A549 (cell line): ENCODE measurements at regions of chr7 and their contacts with region 1.

Region 1: GRCh38 chr7:103074519-103075336 is at the starts of genes ARMC10 and FBXL13:
- DNase-seq: peak; percentile 91 to 92
- ATAC-seq: peak; percentile 89 to 93
- H3K4me3 ChIP-seq: peak within 1 kb of the TSS; percentile 93
- H3K27ac ChIP-seq: peak within 1 kb of the TSS; percentile 88 to 94
- H3K4me1 ChIP-seq: peaks cover 15% of the 10 kb centered on the region
- CTCF ChIP-seq: 0 out of 3 replicates have a peak, but pooled peaks have one; percentile 7
- EP300 ChIP-seq: peak in 1 of 2 experiments; percentile 20; a peak in 1 of 5 replicates
- POLR2A ChIP-seq: peak; percentile 87
- RAD21 ChIP-seq: no peak
- polyA plus RNA-seq, gene ARMC10: 61.9 and 63.2 TPM in 2 replicates
- polyA plus RNA-seq, gene FBXL13: 0.70 and 0.78 TPM in 2 replicates

Region 2: GRCh38 chr7:102433219-102434038 is 641.3 kb before region 1 on chr7 and contains the start of gene ORAI2:
- CTCF ChIA-PET with region 1: no interaction called
- POLR2A ChIA-PET with region 1: no interaction called
- DNase-seq: peak; percentile 51 to 81
- ATAC-seq: peak; percentile 63 to 74
- H3K4me3 ChIP-seq: peak within 1 kb of the TSS; percentile 89
- H3K27ac ChIP-seq: peak within 1 kb of the TSS; percentile 85 to 98
- H3K4me1 ChIP-seq: peaks cover 30% of the 10 kb centered on the region
- CTCF ChIP-seq: no peak
- EP300 ChIP-seq: no peak
- POLR2A ChIP-seq: peak; percentile 56
- RAD21 ChIP-seq: no peak
- polyA plus RNA-seq, gene ORAI2: 12.8 and 14.6 TPM in 2 replicates

Region 3: GRCh38 chr7:103059471-103059870 is 15.3 kb before region 1 on chr7:
- CTCF ChIA-PET with region 1: interaction called, 61 read pairs
- POLR2A ChIA-PET with region 1: interaction called, 19 read pairs
- DNase-seq: no peak
- ATAC-seq: no peak
- H3K4me3 ChIP-seq: no peak overlapping the region
- H3K27ac ChIP-seq: no peak overlapping the region
- H3K4me1 ChIP-seq: no peaks in the 10 kb centered on the region
- CTCF ChIP-seq: no peak
- EP300 ChIP-seq: no peak
- POLR2A ChIP-seq: no peak
- RAD21 ChIP-seq: no peak

Region 4: DNA sequence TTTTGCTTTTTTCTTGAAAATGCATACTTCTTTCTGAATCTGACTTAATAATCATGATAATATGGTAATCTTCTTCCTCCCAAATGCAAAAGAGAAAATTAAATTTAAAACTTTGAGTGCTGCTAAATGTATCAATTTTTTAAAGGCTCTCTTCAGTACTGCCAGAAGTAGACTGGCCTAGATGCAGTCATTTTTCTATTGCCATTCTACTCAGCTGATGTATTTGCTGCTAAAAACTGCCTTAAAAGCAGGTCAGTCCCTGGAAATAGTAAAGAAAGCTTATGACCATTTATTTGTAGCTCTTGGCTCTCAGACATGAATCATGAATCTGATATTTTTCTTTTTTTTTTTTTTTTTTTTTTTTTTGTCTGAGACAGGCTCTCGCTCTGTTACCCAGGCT is 45.6 kb after region 1 on chr7:
- CTCF ChIA-PET with region 1: no interaction called
- POLR2A ChIA-PET with region 1: no interaction called
- DNase-seq: no peak
- ATAC-seq: no peak
- H3K4me3 ChIP-seq: no peak overlapping the region
- H3K27ac ChIP-seq: no peak overlapping the region
- H3K4me1 ChIP-seq: peaks cover 15% of the 10 kb centered on the region
- CTCF ChIP-seq: no peak
- EP300 ChIP-seq: no peak
- POLR2A ChIP-seq: no peak
- RAD21 ChIP-seq: no peak

Region 5: DNA sequence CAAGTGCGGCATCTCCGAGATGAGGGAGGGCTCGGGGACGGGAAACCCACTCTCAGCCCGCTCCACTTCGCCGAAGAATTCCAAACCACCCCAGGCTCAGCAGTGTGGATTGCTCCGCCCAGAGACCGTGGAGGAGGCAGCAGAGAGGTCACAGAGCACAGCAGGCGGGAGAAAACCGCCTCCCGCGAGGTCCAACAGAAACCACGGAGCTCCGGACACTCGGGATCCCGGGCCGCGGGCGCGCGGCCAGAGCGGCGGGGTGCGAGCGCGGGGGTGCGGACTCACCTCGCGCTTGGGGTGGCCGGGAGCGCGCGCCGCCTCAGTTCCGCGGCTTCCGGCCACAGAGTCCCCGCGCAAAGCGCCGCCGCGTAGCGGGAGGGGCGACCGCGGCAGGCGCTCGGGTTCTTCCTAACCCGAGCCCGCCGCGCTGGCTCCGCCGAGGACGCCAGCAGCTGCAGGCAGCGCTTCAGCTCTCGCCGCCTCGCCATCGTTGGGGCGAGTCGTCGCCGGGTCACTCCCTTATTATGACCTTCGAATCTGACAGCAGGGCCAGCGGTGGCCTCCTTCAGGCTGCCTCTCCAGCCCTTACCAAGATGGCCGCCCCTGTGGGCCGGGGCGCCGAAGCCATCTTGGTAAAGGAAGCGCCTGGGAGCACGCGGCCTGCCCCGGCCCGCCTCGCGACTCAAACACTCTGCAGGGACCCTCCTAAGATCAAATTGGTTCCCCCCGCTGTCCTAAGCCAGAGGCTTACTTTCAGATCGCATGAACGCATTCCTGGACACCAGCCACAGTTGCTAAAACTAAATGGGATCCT is 74.5 kb after region 1 on chr7 and contains the start of gene NAPEPLD:
- CTCF ChIA-PET with region 1: no interaction called
- POLR2A ChIA-PET with region 1: interaction called, 26 read pairs
- DNase-seq: peak; percentile 89 to 94
- ATAC-seq: peak; percentile 94 to 95
- H3K4me3 ChIP-seq: peak within 1 kb of the TSS; percentile 63
- H3K27ac ChIP-seq: peak within 1 kb of the TSS; percentile 92 to 93
- H3K4me1 ChIP-seq: peaks cover 14% of the 10 kb centered on the region; the same call in 2 of the 3 replicates
- CTCF ChIP-seq: no peak
- EP300 ChIP-seq: no peak
- POLR2A ChIP-seq: peak; percentile 21
- RAD21 ChIP-seq: no peak
- polyA plus RNA-seq, gene NAPEPLD: 12.0 and 12.1 TPM in 2 replicates

Region 6: GRCh38 chr7:103499907-103500306 is 425.2 kb after region 1 on chr7:
- CTCF ChIA-PET with region 1: no interaction called
- POLR2A ChIA-PET with region 1: no interaction called
- DNase-seq: no peak
- ATAC-seq: no peak
- H3K4me3 ChIP-seq: no peak overlapping the region
- H3K27ac ChIP-seq: no peak overlapping the region
- H3K4me1 ChIP-seq: no peaks in the 10 kb centered on the region
- CTCF ChIP-seq: no peak
- EP300 ChIP-seq: no peak
- POLR2A ChIP-seq: no peak
- RAD21 ChIP-seq: no peak

Region 7: GRCh38 chr7:103718482-103719415 is 644.0 kb after region 1 on chr7:
- CTCF ChIA-PET with region 1: no interaction called
- POLR2A ChIA-PET with region 1: no interaction called
- DNase-seq: no peak
- ATAC-seq: no peak
- H3K4me3 ChIP-seq: no peak overlapping the region
- H3K27ac ChIP-seq: no peak overlapping the region
- H3K4me1 ChIP-seq: no peaks in the 10 kb centered on the region
- CTCF ChIP-seq: no peak
- EP300 ChIP-seq: no peak
- POLR2A ChIP-seq: no peak
- RAD21 ChIP-seq: no peak